Naive thymus-derived CD8-positive, alpha-beta T cell (primary cell): ENCODE measurements at regions of chr3 and their contacts with region 1.

Region 1: DNA sequence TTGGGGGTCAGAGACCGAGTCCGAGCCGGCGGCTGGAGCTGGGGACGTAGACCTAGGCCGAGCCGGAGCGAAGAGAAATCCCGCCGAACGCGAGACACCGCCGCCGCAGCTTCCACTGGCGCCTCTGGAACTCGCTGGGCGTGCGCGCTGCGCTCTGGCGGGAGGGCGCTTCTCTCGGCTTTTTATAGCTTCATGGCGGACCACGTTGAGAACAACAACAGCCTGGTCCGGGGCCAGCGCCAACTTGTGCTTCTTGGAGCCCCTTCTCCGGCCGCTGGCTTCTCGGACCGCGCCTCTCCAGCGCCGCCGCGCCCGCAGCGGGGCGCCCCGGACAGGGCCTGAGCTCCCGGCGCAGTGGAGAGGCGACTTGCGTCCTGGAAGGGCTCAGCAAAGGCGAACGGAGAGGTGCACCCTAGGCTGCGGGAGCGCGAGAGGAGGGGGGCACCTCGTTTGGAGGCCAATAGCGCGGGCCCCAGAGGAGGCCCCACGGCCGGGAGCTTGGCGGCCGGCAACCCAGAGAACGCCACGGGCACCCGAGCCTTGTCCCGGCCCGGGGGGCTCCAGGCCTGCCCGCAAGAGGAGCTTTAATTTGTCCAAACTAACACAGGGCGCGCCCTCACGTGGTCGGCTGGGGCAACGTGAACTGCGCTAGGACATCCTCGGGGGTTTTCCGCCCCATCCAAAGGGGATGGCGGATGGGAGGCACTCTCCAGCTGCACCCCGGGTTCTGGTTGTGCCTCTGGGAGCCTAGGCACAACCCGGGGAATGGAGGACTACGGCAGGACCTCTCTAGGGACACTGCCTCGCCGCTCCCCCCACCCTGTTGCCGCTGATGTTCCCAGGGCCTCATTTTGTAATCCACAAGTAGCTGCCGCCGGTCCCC is 37.7 kb downstream of the HMCES start:
- DNase-seq: peak; percentile 75 to 92 (median 88)
- ATAC-seq: peak; percentile 54 to 59
- H3K4me3 Mint-ChIP-seq: peak overlapping the region; percentile 78 to 97 (median 89)
- H3K27ac Mint-ChIP-seq: peak overlapping the region; percentile 66 to 96 (median 88)
- H3K4me1 Mint-ChIP-seq: peaks cover 21 to 32% (median 31%) of the 10 kb centered on the region in 4 donors
- H3K27me3 Mint-ChIP-seq: no peaks in the 10 kb centered on the region

Region 2: GRCh38 chr3:129016356-129016719 is 300.0 kb before region 1 on chr3:
- POLR2A ChIA-PET with region 1: interaction called, 10 read pairs
- DNase-seq: peak; percentile 55 to 88 (median 68)
- ATAC-seq: peak; percentile 91 to 92
- H3K4me3 Mint-ChIP-seq: peak overlapping the region; percentile 43 to 94 (median 80)
- H3K27ac Mint-ChIP-seq: peak overlapping the region; percentile 77 to 100 (median 96)
- H3K4me1 Mint-ChIP-seq: peaks cover 26 to 55% (median 49%) of the 10 kb centered on the region in 4 donors
- H3K27me3 Mint-ChIP-seq: no peaks in the 10 kb centered on the region

Region 3: GRCh38 chr3:129160891-129161859 is 155.2 kb before region 1 on chr3 and contains the start of gene ISY1:
- POLR2A ChIA-PET with region 1: interaction called, 10 read pairs
- DNase-seq: peak; percentile 74 to 93 (median 87)
- ATAC-seq: peak; percentile 80 to 81
- H3K4me3 Mint-ChIP-seq: peak within 1 kb of the TSS; percentile 96 to 100 (median 98)
- H3K27ac Mint-ChIP-seq: peak within 1 kb of the TSS; percentile 98 to 100 (median 99)
- H3K4me1 Mint-ChIP-seq: peaks cover 12 to 48% (median 36%) of the 10 kb centered on the region in 4 donors
- H3K27me3 Mint-ChIP-seq: no peaks in the 10 kb centered on the region
- polyA plus RNA-seq, gene ISY1: 101 to 119 (median 107) TPM

Region 4: GRCh38 chr3:129249276-129250065 is 66.9 kb before region 1 on chr3 and contains the start of gene COPG1:
- POLR2A ChIA-PET with region 1: interaction called, 28 read pairs
- DNase-seq: peak; percentile 78 to 92 (median 86)
- ATAC-seq: peak; percentile 82 to 88
- H3K4me3 Mint-ChIP-seq: peak within 1 kb of the TSS; percentile 93 to 99 (median 96)
- H3K27ac Mint-ChIP-seq: peak within 1 kb of the TSS; percentile 91 to 98 (median 97)
- H3K4me1 Mint-ChIP-seq: peaks cover 18 to 61% (median 42%) of the 10 kb centered on the region in 4 donors
- H3K27me3 Mint-ChIP-seq: no peaks in the 10 kb centered on the region
- polyA plus RNA-seq, gene COPG1: 54.0 to 75.5 (median 58.5) TPM

Region 5: GRCh38 chr3:129278439-129278970 is 37.9 kb before region 1 on chr3 and contains the start of gene HMCES:
- POLR2A ChIA-PET with region 1: interaction called, 151 read pairs
- DNase-seq: peak; percentile 92 to 97 (median 94)
- ATAC-seq: peak; percentile 88 to 89
- H3K4me3 Mint-ChIP-seq: peak within 1 kb of the TSS; percentile 89 to 99 (median 98)
- H3K27ac Mint-ChIP-seq: peak within 1 kb of the TSS; percentile 87 to 100 (median 99)
- H3K4me1 Mint-ChIP-seq: peaks cover 22 to 68% (median 43%) of the 10 kb centered on the region in 4 donors
- H3K27me3 Mint-ChIP-seq: no peaks in the 10 kb centered on the region
- polyA plus RNA-seq, gene HMCES: 82.2 to 112 (median 83.9) TPM

Region 6: DNA sequence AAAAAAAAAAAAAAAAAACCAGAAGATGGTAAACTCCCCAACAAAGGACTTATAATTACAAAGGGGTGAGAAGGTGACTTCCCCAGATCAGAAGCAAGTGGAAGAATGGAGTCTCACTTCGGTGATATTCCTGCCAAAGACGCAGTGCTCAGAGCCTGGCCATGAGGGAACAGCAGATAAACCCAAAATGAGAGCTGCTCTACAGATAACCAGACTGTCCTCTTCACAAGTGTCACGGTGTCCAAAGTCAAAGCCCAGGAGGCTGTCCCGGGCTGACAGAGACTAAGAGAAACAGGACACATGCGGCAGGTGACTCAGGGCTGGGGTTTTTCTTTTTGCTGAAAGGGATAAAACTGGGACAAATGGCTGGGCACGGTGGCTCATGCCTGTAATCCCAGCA is 11.1 kb after region 1 on chr3:
- POLR2A ChIA-PET with region 1: interaction called, 15 read pairs
- DNase-seq: no peak
- ATAC-seq: no peak
- H3K4me3 Mint-ChIP-seq: no peak overlapping the region
- H3K27ac Mint-ChIP-seq: no peak overlapping the region
- H3K4me1 Mint-ChIP-seq: peaks cover 0 to 7% (median 0%) of the 10 kb centered on the region in 4 donors
- H3K27me3 Mint-ChIP-seq: no peaks in the 10 kb centered on the region

Region 7: GRCh38 chr3:129341331-129342141 is 25.2 kb after region 1 on chr3:
- POLR2A ChIA-PET with region 1: no interaction called
- DNase-seq: no peak
- ATAC-seq: no peak
- H3K4me3 Mint-ChIP-seq: no peak overlapping the region
- H3K27ac Mint-ChIP-seq: no peak overlapping the region
- H3K4me1 Mint-ChIP-seq: peaks cover 3 to 12% (median 6%) of the 10 kb centered on the region in 4 donors
- H3K27me3 Mint-ChIP-seq: peaks cover 9 to 37% (median 23%) of the 10 kb centered on the region in 5 donors

Region 8: DNA sequence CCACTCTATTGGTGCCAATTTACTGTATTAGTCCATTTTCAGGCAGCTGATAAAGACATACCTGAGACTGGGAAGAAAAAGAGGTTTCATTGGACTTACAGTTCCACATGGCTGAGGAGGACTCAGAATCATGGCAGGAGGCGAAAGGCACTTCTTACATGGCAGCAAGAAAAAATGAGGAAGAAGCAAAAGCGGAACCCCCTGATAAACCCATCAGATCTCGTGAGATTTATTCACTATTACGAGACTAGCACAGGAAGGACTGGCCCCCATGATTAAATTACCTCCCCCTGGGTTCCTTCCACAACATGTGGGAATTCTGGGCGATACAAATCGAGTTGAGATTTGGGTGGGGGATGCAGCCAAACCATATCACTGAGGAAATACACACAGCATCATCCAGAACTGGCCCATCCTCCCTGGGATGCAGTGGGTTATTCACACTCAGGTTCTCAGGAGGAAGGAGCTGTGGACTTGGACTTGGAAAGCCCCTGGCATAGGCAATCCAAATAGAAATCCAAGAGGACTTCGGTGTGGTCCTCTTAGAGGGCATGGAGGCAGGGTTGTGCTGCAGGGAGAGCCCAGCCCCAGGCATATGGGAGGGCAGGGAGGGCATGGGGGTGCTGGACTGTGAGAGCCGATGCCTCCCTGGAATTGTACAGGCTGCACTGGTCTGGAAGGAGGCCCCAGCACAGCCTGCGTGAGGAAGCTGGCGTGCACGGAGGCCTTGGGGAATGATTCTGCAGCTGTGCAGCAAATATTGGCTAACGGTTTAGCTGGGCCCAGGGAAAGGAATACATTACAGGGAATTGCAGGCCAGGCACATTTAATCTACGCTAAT is 49.1 kb after region 1 on chr3:
- POLR2A ChIA-PET with region 1: no interaction called
- DNase-seq: no peak
- ATAC-seq: no peak
- H3K4me3 Mint-ChIP-seq: no peak overlapping the region
- H3K27ac Mint-ChIP-seq: peak overlapping the region in 1 of 10 donors; percentile 19
- H3K4me1 Mint-ChIP-seq: peaks cover 0 to 3% (median under 1%) of the 10 kb centered on the region in 4 donors
- H3K27me3 Mint-ChIP-seq: no peaks in the 10 kb centered on the region

Region 9: DNA sequence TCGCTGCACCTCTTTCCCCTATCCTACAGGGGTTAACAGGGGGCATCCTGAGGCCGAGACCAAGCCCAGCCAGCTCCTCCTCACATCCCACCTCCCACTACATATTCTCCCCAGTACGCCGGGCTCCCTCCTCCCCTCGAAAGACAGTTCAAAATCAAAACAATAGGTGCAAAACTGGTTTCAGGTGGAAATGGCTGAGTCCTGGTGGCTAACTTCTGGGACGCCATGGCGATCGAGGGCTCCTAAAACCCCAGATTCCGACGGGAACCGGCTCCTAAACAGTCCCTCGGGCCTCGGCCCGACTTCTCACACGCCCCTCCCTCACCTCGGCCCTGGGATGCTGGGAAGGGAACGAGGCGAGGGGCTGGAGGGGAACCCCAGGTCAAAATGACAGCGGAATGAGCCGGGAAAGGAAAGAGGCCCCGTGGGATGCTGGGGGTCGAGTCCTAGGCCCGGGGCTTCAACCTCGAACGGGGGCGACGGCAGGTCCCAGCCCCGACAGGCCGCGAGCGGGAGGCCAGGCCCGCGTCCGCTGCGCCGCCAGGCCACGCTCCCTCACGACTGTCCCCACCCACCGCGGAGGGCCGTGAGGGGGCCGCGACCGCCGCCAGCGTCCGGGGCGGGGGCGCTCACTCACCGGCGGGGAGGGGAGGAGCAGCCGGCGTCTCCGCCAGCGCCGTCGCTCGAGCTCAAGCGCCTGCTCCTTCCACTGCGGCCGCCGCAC is 576.6 kb after region 1 on chr3:
- POLR2A ChIA-PET with region 1: interaction called, 10 read pairs
- DNase-seq: peak; percentile 38 to 84 (median 74)
- ATAC-seq: peak; percentile 70 to 80
- H3K4me3 Mint-ChIP-seq: peak overlapping the region; percentile 89 to 95 (median 92)
- H3K27ac Mint-ChIP-seq: peak overlapping the region; percentile 85 to 97 (median 93)
- H3K4me1 Mint-ChIP-seq: peaks cover 31 to 53% (median 50%) of the 10 kb centered on the region in 4 donors
- H3K27me3 Mint-ChIP-seq: no peaks in the 10 kb centered on the region